ENCODE measurements at regions of chr1 and their contacts with region 1.

Region 1: DNA sequence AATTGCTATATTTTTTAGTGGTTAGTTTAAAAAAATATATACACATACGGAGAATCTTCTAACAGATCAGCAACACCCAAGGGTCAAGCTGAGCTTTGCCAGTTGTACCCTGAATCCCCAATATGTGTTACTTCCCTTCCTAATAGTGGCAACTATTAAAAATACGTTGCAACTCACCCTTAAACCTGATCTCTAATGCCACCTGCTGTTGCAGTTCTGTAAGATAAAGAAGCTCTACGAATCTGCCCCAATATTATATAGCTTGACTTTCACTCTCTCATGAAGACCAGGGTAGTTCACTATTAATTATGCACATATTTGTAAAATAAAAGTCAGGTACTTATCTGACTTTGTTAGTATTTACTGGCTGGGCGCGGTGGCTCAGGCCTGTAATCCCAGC is 58.4 kb downstream of the ASH1L start:
- DNase-seq: peak; percentile 65
- ATAC-seq: peak; percentile 49
- H3K4me3 ChIP-seq: no peak overlapping the region
- H3K4me3 Mint-ChIP-seq: no peak overlapping the region
- H3K27ac ChIP-seq: no peak overlapping the region
- H3K27ac Mint-ChIP-seq: no peak overlapping the region
- H3K4me1 ChIP-seq: peaks cover 33 to 34% of the 10 kb centered on the region in 2 donors
- H3K4me1 Mint-ChIP-seq: peaks cover 43% of the 10 kb centered on the region
- H3K27me3 ChIP-seq: no peaks in the 10 kb centered on the region
- H3K27me3 Mint-ChIP-seq: no peaks in the 10 kb centered on the region
- CTCF ChIP-seq: peak; percentile 71

Region 2: GRCh38 chr1:155360051-155360450 is 144.2 kb before region 1 on chr1:
- CTCF ChIA-PET with region 1: no interaction called
- POLR2A ChIA-PET with region 1: no interaction called
- intact Hi-C with region 1: loop called (anchors 10 kb)
- DNase-seq: no peak
- ATAC-seq: no peak
- H3K4me3 ChIP-seq: no peak overlapping the region
- H3K4me3 Mint-ChIP-seq: no peak overlapping the region
- H3K27ac ChIP-seq: no peak overlapping the region
- H3K27ac Mint-ChIP-seq: no peak overlapping the region
- H3K4me1 ChIP-seq: no peaks in the 10 kb centered on the region
- H3K4me1 Mint-ChIP-seq: no peaks in the 10 kb centered on the region
- H3K27me3 ChIP-seq: no peaks in the 10 kb centered on the region
- H3K27me3 Mint-ChIP-seq: no peaks in the 10 kb centered on the region
- CTCF ChIP-seq: no peak

Region 3: GRCh38 chr1:155420788-155421187 is 83.4 kb before region 1 on chr1:
- CTCF ChIA-PET with region 1: no interaction called
- POLR2A ChIA-PET with region 1: no interaction called
- intact Hi-C with region 1: no loop called
- DNase-seq: no peak
- ATAC-seq: no peak
- H3K4me3 ChIP-seq: no peak overlapping the region
- H3K4me3 Mint-ChIP-seq: no peak overlapping the region
- H3K27ac ChIP-seq: no peak overlapping the region
- H3K27ac Mint-ChIP-seq: no peak overlapping the region
- H3K4me1 ChIP-seq: no peaks in the 10 kb centered on the region
- H3K4me1 Mint-ChIP-seq: peaks cover 1% of the 10 kb centered on the region
- H3K27me3 ChIP-seq: no peaks in the 10 kb centered on the region
- H3K27me3 Mint-ChIP-seq: no peaks in the 10 kb centered on the region
- CTCF ChIP-seq: no peak

Region 4: DNA sequence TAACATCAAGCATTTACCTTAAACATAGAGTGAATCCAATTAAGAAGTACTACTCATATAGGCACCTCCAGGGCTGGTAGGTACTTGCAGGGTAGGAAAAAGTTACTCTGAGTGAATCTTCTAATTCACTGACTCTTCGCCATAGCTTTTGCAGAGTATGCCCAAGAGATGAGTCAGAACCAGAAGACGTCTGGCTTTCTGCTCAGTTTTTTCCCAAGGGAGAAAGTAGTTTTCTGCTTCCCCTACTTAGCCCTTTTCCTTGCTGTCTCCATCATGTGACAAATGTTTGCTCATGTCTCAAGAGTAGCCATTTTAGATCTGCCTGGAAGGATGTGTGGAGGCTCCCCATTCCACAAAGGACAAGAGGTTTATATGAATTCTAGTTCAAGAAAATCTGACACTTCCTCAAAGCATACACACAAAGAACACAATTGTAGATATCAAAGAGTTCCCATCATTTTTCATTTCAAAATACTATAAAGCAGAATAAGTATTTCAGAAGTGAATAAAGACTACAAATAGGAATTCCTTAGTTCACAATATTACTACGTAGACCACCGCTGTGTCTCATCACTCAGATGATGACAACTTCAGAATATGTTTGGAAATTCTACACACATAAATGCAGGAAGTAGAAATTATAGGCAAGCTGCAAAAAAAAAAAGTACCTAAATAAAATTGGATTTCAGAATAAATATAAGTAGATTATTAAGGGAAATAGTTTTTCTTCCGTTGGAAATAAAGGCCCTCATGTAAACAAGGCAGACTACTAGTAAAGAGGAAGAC is 40.1 kb before region 1 on chr1:
- CTCF ChIA-PET with region 1: interaction called, 3 read pairs
- POLR2A ChIA-PET with region 1: interaction called, 4 read pairs
- intact Hi-C with region 1: loop called (anchors 5 kb)
- DNase-seq: no peak
- ATAC-seq: peak; percentile 29
- H3K4me3 ChIP-seq: no peak overlapping the region
- H3K4me3 Mint-ChIP-seq: no peak overlapping the region
- H3K27ac ChIP-seq: peak overlapping the region in 1 of 2 donors; percentile 46
- H3K27ac Mint-ChIP-seq: peak overlapping the region; percentile 66
- H3K4me1 ChIP-seq: peaks cover 0 to 11% of the 10 kb centered on the region in 2 donors
- H3K4me1 Mint-ChIP-seq: peaks cover 40% of the 10 kb centered on the region
- H3K27me3 ChIP-seq: no peaks in the 10 kb centered on the region
- H3K27me3 Mint-ChIP-seq: no peaks in the 10 kb centered on the region
- CTCF ChIP-seq: no peak

Region 5: DNA sequence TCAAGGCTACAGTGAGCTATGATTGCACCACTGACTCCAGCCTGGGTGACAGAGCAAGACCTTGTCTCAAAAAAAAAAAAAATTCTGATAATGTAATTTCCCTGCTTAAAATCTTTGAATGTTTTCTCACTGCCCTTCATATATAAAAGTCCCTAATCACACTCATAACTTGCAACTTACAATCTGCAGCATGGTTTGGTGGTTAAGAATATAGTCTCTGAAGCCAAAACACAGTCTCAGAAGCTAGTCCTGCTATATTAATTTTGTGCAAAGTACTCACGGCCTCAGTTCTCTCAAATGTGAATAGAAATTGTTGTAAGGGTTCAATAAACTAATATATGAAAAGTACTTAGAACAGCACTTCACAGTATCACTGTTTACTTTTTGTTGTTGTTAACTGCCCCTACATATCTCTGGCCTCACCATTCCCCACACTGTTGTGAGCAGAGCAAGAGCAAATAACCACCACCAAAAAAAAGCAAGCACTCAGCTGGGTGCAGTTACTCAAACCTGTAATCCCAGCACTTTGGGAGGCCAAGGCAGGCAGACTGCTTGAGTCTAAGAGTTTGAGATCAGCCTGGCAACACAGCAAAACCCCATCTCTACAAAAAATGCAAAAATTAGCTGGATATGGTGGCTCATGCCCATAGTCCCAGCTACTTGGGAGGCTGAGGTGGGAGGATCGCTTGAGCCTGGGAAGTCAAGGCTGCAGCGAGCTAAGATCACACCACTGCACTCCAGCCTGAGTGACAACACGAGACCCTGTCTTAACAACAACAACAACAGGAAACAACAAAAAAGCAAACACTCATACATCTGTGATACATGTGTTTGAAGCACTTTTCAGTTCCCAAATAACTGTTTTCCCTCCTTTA is 36.0 kb after region 1 on chr1:
- CTCF ChIA-PET with region 1: interaction called, 7 read pairs
- POLR2A ChIA-PET with region 1: interaction called, 4 read pairs
- intact Hi-C with region 1: loop called (anchors 5 kb)
- DNase-seq: no peak
- ATAC-seq: no peak
- H3K4me3 ChIP-seq: no peak overlapping the region
- H3K4me3 Mint-ChIP-seq: peak overlapping the region; percentile 30
- H3K27ac ChIP-seq: peak overlapping the region in 1 of 2 donors; percentile 46
- H3K27ac Mint-ChIP-seq: peak overlapping the region; percentile 75
- H3K4me1 ChIP-seq: peaks cover 43 to 45% of the 10 kb centered on the region in 2 donors
- H3K4me1 Mint-ChIP-seq: peaks cover 53% of the 10 kb centered on the region
- H3K27me3 ChIP-seq: no peaks in the 10 kb centered on the region
- H3K27me3 Mint-ChIP-seq: no peaks in the 10 kb centered on the region
- CTCF ChIP-seq: no peak